Activated CD8-positive, alpha-beta T cell treated with anti-CD3 and anti-CD28 coated beads, Interleukin-2, amount 10 ng/mL, durations not matched to agents 7 days and 5 days (primary cell): ENCODE measurements at regions of chr10 and their contacts with region 1.

Region 1: DNA sequence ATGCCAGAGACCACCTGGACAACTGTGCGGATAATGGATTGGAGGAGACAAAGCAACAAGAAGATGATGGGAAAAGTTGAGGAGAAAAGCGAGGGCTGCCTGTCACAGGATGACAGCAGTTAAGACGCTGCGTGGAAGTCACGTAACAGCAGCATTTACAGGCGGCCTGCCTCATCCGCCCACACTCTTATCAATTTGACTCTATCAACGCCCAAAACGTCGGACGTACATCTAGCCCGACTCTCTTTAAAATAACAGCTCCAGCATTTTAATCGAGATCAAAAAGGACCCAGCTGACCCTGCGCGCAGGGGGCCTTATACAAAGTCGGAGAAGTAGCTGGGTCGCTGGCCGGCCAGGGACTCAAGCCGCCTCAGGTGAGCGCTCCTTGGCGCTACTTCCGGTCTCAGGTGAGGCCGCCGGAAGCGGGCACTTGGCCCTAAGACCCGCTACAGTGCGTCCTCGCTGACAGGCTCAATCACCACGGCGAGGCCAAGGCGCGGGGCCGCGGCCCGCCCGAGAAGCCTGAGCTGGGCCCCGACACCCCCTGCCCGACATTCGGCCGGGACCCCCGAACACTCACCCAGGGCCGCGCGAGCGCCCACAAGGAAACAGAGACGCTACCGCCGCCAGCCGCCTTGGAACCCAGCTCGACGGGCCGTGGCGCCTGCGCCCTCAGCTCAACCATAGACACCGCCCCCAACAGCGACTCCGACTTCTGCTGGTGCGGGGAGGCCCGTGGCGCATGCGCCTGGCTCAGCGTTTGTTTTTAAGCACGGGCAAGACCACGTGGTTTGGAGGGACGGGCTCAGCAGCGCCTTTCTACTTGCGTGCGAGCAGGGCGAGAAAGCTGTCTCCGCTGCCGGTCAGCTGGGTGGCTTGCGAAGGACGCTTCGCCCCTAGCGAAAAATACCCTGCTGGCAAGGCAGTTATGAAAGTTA is at the start of gene ERCC6:
- DNase-seq: peak; percentile 98
- ATAC-seq: peak; percentile 98
- H3K4me3 Mint-ChIP-seq: peak within 1 kb of the TSS; percentile 90
- H3K27ac Mint-ChIP-seq: peak within 1 kb of the TSS; percentile 91
- H3K4me1 Mint-ChIP-seq: peaks cover 41% of the 10 kb centered on the region
- H3K27me3 Mint-ChIP-seq: peaks cover 9% of the 10 kb centered on the region
- total RNA-seq, gene ERCC6: 20.5 to 20.6 TPM

Region 2: GRCh38 chr10:49568235-49568634 is 29.6 kb after region 1 on chr10:
- CTCF ChIA-PET with region 1: interaction called, 11 read pairs
- POLR2A ChIA-PET with region 1: interaction called, 22 read pairs
- DNase-seq: peak; percentile 26
- ATAC-seq: peak; percentile 33
- H3K4me3 Mint-ChIP-seq: peak overlapping the region; percentile 7
- H3K27ac Mint-ChIP-seq: peak overlapping the region; percentile 72
- H3K4me1 Mint-ChIP-seq: peaks cover 38% of the 10 kb centered on the region
- H3K27me3 Mint-ChIP-seq: peaks cover 11% of the 10 kb centered on the region